ENCODE measurements at regions of chr11 and their contacts with region 1.

Region 1: GRCh38 chr11:124961972-124962609 is 8.1 kb downstream of the CCDC15 start:
- DNase-seq: peak; percentile 67
- H3K4me3 ChIP-seq: no peak overlapping the region
- H3K27ac ChIP-seq: no peak overlapping the region
- H3K4me1 ChIP-seq: no peaks in the 10 kb centered on the region
- H3K27me3 ChIP-seq: no peaks in the 10 kb centered on the region
- CTCF ChIP-seq: peak; percentile 73 to 76

Region 2: GRCh38 chr11:124976994-124977393 is 14.9 kb after region 1 on chr11:
- CTCF ChIA-PET with region 1: no interaction called
- dilution Hi-C with region 1: no loop called
- in situ Hi-C with region 1: no loop called
- intact Hi-C with region 1: no loop called
- DNase-seq: no peak
- H3K4me3 ChIP-seq: no peak overlapping the region
- H3K27ac ChIP-seq: no peak overlapping the region
- H3K4me1 ChIP-seq: no peaks in the 10 kb centered on the region
- H3K27me3 ChIP-seq: no peaks in the 10 kb centered on the region
- CTCF ChIP-seq: no peak

Region 3: DNA sequence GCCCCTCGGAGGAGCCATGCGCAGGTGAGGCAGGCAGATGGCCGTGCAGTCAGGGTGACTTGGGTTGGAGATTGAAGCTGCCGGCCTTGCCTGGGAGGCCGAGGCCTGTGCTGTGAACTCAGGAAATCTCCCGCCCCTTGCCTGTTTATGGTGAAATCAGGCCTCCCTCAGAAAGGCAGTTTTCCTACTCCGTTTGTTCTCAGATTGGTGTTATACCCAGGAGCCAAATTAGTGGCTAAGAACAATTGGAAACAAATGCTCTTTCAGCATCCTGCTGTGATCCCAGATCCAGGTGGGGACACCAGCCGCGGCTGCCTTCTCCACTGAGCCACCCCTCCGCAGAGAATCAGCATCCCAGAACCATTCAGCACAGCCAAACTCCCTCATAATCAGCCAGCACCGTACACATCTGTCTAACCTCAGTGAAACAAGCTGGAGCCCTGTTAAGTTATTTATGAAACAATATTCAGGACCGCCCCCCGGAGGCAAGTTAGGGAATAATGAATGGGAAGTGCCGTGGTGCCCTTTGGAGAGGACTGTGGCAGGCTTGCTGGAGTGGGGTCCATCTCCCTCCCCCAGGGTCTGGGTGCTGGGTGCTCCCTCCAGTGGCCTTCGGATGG is 262.4 kb after region 1 on chr11:
- CTCF ChIA-PET with region 1: no interaction called
- dilution Hi-C with region 1: no loop called
- in situ Hi-C with region 1: no loop called
- intact Hi-C with region 1: loop called (anchors 2 kb)
- DNase-seq: peak; percentile 4
- H3K4me3 ChIP-seq: no peak overlapping the region
- H3K27ac ChIP-seq: no peak overlapping the region
- H3K4me1 ChIP-seq: no peaks in the 10 kb centered on the region
- H3K27me3 ChIP-seq: no peaks in the 10 kb centered on the region
- CTCF ChIP-seq: peak; percentile 24 to 38

Measured in mammary epithelial cell (primary cell).